IMR-90 (cell line): ENCODE measurements at regions of chr6 and their contacts with region 1.

Region 1: GRCh38 chr6:70667711-70668498 is at the start of gene SMAP1:
- DNase-seq: peak; percentile 84
- ATAC-seq: peak; percentile 97
- H3K4me3 ChIP-seq: peak within 1 kb of the TSS; percentile 97
- H3K27ac ChIP-seq: peak within 1 kb of the TSS; percentile 84
- H3K4me1 ChIP-seq: no peaks in the 10 kb centered on the region
- H3K27me3 ChIP-seq: no peaks in the 10 kb centered on the region
- CTCF ChIP-seq: no peak
- POLR2A ChIP-seq: peak; percentile 63
- RAD21 ChIP-seq: no peak
- total RNA-seq, gene SMAP1: 16.7 and 18.1 TPM in 2 replicates

Region 2: GRCh38 chr6:70566751-70567382 is 101.0 kb before region 1 on chr6 and contains the start of gene SDHAF4:
- CTCF ChIA-PET with region 1: interaction called, 4 read pairs
- POLR2A ChIA-PET with region 1: no interaction called
- dilution Hi-C with region 1: no loop called
- in situ Hi-C with region 1: no loop called
- intact Hi-C with region 1: loop called (anchors 5 kb)
- DNase-seq: peak; percentile 76
- ATAC-seq: peak; percentile 100
- H3K4me3 ChIP-seq: peak within 1 kb of the TSS; percentile 90
- H3K27ac ChIP-seq: peak within 1 kb of the TSS; percentile 68
- H3K4me1 ChIP-seq: no peaks in the 10 kb centered on the region
- H3K27me3 ChIP-seq: no peaks in the 10 kb centered on the region
- CTCF ChIP-seq: no peak
- POLR2A ChIP-seq: no peak; the same call in 1 of the 2 replicates
- RAD21 ChIP-seq: no peak
- total RNA-seq, gene SDHAF4: 1.6 and 2.5 TPM in 2 replicates